ENCODE measurements at regions of chrX and their contacts with region 1.

Region 1: GRCh38 chrX:152895724-152896420 is 2.0 kb upstream of the ZNF185 start:
- DNase-seq: peak; percentile 77
- H3K4me3 ChIP-seq: no peak overlapping the region
- H3K27ac ChIP-seq: peak overlapping the region; percentile 16
- H3K4me1 ChIP-seq: peaks cover 43% of the 10 kb centered on the region
- H3K27me3 ChIP-seq: no peaks in the 10 kb centered on the region
- CTCF ChIP-seq: no peak

Region 2: GRCh38 chrX:152878976-152879755 is 16.7 kb before region 1 on chrX:
- CTCF ChIA-PET with region 1: no interaction called
- dilution Hi-C with region 1: no loop called
- in situ Hi-C with region 1: no loop called
- intact Hi-C with region 1: loop called (anchors 1 kb)
- DNase-seq: peak; percentile 87
- H3K4me3 ChIP-seq: no peak overlapping the region
- H3K27ac ChIP-seq: peak overlapping the region; percentile 71
- H3K4me1 ChIP-seq: peaks cover 30% of the 10 kb centered on the region
- H3K27me3 ChIP-seq: no peaks in the 10 kb centered on the region
- CTCF ChIP-seq: peak in 1 of 2 donors; percentile 36

Measured in mammary epithelial cell (primary cell).